Activated naive CD4-positive, alpha-beta T cell treated with anti-CD3 and anti-CD28 coated beads for 36 hours (primary cell): ENCODE measurements at regions of chr19 and their contacts with region 1.

Region 1: DNA sequence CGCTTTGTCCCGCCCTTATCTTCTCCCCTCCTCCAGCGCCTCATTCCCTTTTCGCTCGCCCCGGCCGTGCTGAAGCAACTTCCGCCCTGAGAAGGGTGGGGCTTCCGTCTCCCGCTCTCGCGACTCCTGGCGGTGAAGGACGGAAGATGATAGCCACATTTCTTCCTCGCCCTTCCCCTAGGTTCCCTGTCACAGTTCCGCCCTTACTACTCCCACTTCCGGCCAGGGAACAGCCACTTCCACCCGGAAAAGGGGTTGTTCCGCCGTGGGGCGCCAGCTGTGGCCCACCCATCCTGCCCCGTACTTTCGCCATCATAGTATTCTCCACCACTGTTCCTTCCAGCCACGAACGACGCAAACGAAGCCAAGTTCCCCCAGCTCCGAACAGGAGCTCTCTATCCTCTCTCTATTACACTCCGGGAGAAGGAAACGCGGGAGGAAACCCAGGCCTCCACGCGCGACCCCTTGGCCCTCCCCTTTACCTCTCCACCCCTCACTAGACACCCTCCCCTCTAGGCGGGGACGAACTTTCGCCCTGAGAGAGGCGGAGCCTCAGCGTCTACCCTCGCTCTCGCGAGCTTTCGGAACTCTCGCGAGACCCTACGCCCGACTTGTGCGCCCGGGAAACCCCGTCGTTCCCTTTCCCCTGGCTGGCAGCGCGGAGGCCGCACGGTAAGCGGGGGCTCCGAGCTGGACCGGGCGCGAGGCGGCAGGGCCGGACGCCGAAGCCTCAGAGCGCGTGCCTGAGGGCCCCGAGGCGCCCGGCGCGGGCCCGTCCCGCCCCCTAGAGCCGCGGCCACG is at the start of gene RPS19:
- DNase-seq: peak; percentile 99
- H3K4me3 Mint-ChIP-seq: peak within 1 kb of the TSS; percentile 90
- H3K27ac Mint-ChIP-seq: peak within 1 kb of the TSS; percentile 97
- H3K4me1 Mint-ChIP-seq: peaks cover 46% of the 10 kb centered on the region
- H3K27me3 Mint-ChIP-seq: no peaks in the 10 kb centered on the region
- total RNA-seq, gene RPS19: 4,092 to 4,109 TPM

Region 2: DNA sequence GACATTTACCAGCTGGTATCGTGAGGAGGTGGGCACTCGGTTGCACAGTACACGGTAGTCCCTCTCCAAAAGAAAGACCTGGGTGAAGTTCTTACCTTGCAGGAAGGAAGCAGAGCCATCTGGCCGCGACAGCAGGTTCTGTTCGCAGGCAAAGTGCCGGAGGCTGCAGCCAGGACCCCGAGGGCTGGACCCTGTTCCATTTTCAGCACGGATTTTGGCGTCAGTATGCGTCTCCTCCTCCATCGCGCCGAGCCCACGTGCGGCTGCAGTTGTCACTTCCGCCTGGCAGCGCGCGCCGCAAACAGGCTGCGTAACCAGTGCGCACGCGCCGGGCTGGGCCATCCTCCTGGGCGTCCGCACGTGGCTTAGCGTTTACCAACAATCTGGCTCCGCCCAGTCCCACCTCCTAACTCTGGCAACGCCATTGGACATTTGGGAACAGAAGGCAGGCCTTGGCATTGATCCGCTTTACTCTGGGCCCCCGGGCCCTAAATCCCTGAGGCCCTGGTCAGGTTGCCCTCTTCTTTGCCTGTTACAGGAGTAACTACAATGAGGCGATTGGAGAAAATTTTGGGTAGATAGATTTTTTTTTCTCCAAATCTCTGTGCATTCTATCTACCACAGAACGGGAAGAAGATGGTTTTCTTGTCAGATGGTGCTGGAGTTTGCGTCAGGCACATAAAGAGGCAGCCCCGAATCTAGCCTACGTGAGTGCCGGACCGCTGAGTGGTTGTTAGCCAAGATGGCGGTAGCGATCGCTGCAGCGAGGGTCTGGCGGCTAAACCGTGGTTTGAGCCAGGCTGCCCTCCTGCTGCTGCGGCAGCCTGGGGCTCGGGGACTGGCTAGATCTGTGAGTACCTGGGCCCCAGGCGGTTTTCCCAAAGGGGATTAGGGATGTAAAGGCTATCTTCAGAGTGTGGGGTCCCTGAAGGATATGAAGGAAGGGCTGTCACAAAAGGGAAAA is 462.4 kb before region 1 on chr19 and contains the starts of genes BCKDHA and EXOSC5:
- CTCF ChIA-PET with region 1: no interaction called
- intact Hi-C with region 1: no loop called
- DNase-seq: peak; percentile 100
- H3K4me3 Mint-ChIP-seq: peak within 1 kb of the TSS; percentile 97
- H3K27ac Mint-ChIP-seq: peak within 1 kb of the TSS; percentile 98
- H3K4me1 Mint-ChIP-seq: peaks cover 37% of the 10 kb centered on the region
- H3K27me3 Mint-ChIP-seq: no peaks in the 10 kb centered on the region
- total RNA-seq, gene BCKDHA: 18.2 to 21.7 TPM
- total RNA-seq, gene EXOSC5: 47.5 to 51.7 TPM

Region 3: DNA sequence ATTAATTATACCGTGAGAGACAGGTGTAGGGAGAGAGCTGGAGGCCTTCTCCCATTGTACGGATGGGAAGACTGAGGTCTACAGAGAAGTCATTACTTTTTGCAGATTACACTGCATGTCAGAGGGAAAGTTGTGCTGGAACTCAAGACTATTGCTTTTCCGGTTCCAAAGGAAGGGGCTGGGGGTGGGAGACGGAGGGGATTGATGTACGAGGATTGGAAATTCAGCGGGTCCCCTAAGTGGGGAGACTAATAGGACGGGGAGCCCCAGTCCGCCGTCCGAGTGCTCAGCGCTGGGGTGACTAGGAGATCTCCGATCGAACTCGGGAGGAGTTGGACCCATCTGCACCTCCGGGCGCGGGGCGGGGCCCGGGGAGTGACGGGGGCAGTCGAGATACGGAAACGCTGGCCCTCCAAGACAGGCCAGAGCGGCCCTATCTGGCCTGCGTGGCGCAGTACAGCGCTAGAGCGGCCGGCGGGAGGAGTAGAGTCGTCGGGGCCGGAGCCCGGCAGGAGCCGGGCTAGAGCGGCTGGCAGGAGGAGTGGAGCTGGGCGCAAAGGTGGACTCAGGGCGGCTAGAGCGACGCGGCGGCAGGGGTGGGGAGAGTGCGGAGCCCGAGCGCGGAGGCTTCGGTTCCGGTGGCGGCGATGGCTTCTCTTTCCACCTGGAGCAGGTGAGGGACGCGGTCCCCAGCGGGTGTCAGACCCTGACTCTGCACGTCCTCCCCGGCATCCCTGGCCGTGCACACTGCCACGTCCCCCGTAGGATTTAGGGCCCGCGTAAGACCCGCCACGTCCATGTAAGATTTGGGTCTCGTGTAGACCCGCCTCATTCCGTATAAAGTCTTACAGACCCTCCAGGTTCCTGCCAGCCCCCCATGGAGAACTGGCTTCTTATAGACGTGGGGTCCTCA is 24.3 kb after region 1 on chr19:
- CTCF ChIA-PET with region 1: interaction called, 7 read pairs
- intact Hi-C with region 1: loop called (anchors 1 kb)
- DNase-seq: peak; percentile 91
- H3K4me3 Mint-ChIP-seq: peak overlapping the region; percentile 90
- H3K27ac Mint-ChIP-seq: peak overlapping the region; percentile 92
- H3K4me1 Mint-ChIP-seq: peaks cover 54% of the 10 kb centered on the region
- H3K27me3 Mint-ChIP-seq: no peaks in the 10 kb centered on the region

Region 4: GRCh38 chr19:41945135-41945766 is 85.4 kb after region 1 on chr19:
- CTCF ChIA-PET with region 1: interaction called, 12 read pairs
- intact Hi-C with region 1: loop called (anchors 1 kb)
- DNase-seq: peak; percentile 98
- H3K4me3 Mint-ChIP-seq: peak overlapping the region; percentile 48
- H3K27ac Mint-ChIP-seq: peak overlapping the region; percentile 93
- H3K4me1 Mint-ChIP-seq: peaks cover 42% of the 10 kb centered on the region
- H3K27me3 Mint-ChIP-seq: no peaks in the 10 kb centered on the region

Region 5: GRCh38 chr19:41959056-41960053 is 99.5 kb after region 1 on chr19 and contains the start of gene RABAC1:
- CTCF ChIA-PET with region 1: interaction called, 6 read pairs
- intact Hi-C with region 1: loop called (anchors 1 kb)
- DNase-seq: peak; percentile 95
- H3K4me3 Mint-ChIP-seq: peak within 1 kb of the TSS; percentile 95
- H3K27ac Mint-ChIP-seq: peak within 1 kb of the TSS; percentile 81
- H3K4me1 Mint-ChIP-seq: peaks cover 13% of the 10 kb centered on the region
- H3K27me3 Mint-ChIP-seq: no peaks in the 10 kb centered on the region
- total RNA-seq, gene RABAC1: 32.8 TPM

Region 6: DNA sequence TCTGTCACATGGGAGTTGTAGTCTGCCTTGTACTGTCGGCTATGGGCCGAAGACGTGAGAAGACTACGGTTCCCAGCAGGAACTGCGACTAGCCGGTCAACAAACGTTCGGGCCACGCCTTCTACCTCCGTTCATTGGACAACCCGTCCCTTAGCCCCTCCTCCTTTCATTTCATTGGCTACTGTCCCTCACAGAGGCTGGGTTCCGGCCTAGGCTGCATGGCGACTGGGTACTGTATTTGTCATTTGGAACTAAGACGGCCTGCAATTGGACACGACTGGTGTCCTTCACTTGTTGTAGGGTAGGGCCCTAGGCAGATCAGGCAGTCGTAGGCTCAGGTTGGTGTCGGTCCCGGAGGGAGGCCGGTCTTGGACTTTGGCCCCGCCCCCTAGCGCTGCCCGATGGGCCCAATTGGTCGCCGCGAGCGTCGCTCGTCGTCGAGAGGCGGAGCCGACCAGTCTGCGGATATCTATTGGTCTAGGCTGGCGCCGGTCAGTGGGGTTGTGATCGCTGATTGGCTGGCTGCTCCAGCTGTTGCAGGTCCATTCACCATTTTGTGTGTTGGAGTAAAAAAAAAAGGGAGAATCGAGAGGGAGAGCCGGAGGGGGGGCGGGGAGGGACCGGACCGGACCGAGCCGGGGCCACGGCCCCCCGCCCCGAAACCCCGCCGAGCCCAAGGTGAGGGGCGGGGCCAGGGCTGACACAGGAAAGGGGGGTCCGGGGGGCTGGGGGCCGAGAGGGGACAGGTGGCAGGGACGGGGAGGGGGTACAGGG is 409.1 kb after region 1 on chr19 and contains the start of gene CIC:
- CTCF ChIA-PET with region 1: no interaction called
- intact Hi-C with region 1: loop called (anchors 1 kb)
- DNase-seq: peak; percentile 100
- H3K4me3 Mint-ChIP-seq: no peak within 1 kb of the TSS
- H3K27ac Mint-ChIP-seq: peak within 1 kb of the TSS; percentile 99
- H3K4me1 Mint-ChIP-seq: peaks cover 30% of the 10 kb centered on the region
- H3K27me3 Mint-ChIP-seq: no peaks in the 10 kb centered on the region
- total RNA-seq, gene CIC: 60.2 to 61.5 TPM